ENCODE measurements at regions of chr5 and their contacts with region 1.

Region 1: GRCh38 chr5:147857302-147858129 is 21.0 kb upstream of the SCGB3A2 start:
- DNase-seq: peak; percentile 82
- H3K4me3 Mint-ChIP-seq: no peak overlapping the region
- H3K27ac Mint-ChIP-seq: no peak overlapping the region
- H3K4me1 Mint-ChIP-seq: no peaks in the 10 kb centered on the region
- H3K27me3 Mint-ChIP-seq: peaks cover 13% of the 10 kb centered on the region

Region 2: DNA sequence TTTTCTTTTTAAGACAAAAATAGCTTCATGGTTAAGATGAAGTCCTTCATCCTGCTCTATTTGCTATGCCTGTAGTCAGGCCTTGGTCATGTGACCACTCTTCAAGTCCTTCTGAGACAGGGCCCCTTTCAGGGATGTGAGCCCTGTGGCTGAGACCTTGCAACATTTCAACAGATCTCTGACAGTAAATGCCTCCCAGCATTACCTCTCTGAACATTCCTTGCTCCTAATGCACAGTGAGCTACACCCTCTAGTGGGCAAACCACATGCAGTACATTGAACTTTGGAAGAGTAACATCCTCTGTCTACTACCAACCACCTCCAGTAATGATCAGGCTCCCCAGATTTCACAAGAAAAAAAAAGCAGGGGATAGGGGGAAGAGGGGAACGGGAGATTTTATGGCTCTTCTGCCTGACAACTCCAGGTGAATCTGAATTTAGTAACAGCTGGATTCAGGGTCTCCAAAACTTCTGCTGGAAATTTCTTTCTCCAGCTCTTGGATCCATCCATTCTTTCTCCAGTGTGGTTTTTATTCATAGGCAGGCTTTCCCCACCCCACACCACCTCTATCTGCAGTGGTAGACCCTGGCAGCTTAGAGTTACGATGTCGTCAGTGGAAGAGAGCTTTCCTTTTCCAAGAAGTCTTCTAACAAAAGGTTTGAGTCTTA is 517.3 kb after region 1 on chr5:
- intact Hi-C with region 1: loop called (anchors 10 kb)
- DNase-seq: peak; percentile 75
- H3K4me3 Mint-ChIP-seq: no peak overlapping the region
- H3K27ac Mint-ChIP-seq: no peak overlapping the region
- H3K4me1 Mint-ChIP-seq: peaks cover 6% of the 10 kb centered on the region
- H3K27me3 Mint-ChIP-seq: no peaks in the 10 kb centered on the region

Region 3: DNA sequence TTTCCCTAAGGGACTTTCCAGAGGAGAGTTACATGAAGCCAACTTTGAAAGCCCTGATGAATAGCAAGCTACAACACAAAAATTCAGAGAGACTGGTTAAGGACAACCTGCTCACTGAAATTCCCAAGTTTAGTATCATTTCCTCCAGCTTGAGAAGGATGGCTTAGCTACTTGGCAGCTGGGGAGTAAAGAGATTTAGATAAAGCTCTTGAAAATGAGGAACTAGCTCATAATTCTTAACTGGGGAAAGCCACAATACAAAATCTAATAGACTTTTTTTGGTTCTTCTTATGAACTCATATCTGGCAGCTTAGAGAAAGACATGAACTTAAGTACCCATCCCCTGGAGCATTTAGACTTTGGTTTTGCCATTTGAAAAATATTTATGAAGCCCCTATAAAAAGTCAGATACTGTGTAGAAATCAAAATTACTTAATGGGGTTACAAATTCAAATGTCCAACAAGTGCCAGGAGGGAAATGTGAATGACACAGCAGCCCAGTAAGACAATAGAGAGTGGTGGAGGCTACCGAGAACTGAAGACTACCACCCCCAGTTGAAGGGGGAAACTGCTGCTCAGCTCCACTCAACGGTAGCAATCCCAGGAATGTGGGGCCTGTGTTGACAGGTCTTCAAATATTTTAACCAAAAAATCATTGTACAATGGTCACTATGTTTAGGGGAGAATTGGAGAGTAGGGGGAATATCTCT is 889.5 kb after region 1 on chr5:
- intact Hi-C with region 1: no loop called
- DNase-seq: no peak
- H3K4me3 Mint-ChIP-seq: no peak overlapping the region
- H3K27ac Mint-ChIP-seq: no peak overlapping the region
- H3K4me1 Mint-ChIP-seq: no peaks in the 10 kb centered on the region
- H3K27me3 Mint-ChIP-seq: peaks cover 22% of the 10 kb centered on the region